Body of pancreas (tissue), 4 donors: ENCODE measurements at regions of chr21 and their contacts with region 1.

Region 1: DNA sequence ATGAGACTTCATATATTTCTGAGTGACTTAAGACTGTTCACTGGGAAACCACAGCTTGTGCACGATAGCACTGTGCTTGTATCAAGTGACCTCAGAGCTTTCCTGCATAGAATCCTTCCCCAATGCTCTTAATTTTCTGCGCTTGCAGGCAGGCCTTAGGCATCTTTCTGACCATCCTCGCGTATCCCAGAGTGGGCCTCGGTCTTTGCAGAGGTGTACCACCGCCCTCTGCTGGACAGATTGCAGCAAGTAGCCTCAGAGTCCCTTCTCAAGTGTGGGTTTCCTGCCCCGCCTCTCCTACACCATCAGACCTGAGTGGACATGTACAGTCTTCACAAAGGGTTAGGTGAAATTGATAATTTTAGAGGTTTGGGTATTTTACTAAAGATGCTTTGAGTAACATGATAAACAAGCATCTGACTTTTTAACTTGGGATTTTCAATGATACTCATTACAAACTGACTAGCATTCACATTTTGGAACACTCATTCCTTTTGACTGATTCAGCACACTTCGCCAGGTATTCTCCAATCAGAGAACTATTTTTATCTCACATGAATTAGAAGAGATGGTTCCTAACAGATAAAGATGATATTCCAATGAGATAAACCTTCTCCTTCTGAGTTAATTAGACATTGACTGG is 246.5 kb upstream of the USP25 start:
- DNase-seq: peak; percentile 88 to 91 (median 90)
- ATAC-seq: peak; percentile 98
- H3K4me3 ChIP-seq: no peak overlapping the region
- H3K27ac ChIP-seq: no peak overlapping the region
- H3K4me1 ChIP-seq: no peaks in the 10 kb centered on the region
- H3K27me3 ChIP-seq: no peaks in the 10 kb centered on the region
- CTCF ChIP-seq: peak; percentile 83 to 91 (median 87)
- POLR2A ChIP-seq: no peak

Region 2: GRCh38 chr21:14864211-14865021 is 618.8 kb before region 1 on chr21:
- intact Hi-C with region 1: loop called (anchors 10 kb)
- DNase-seq: peak; percentile 72 to 81 (median 77)
- ATAC-seq: peak; percentile 90
- H3K4me3 ChIP-seq: no peak overlapping the region
- H3K27ac ChIP-seq: peak overlapping the region in 2 of 4 donors; percentile 9 to 47
- H3K4me1 ChIP-seq: peaks cover 8% of the 10 kb centered on the region
- H3K27me3 ChIP-seq: no peaks in the 10 kb centered on the region
- CTCF ChIP-seq: peak; percentile 21 to 68 (median 57)
- POLR2A ChIP-seq: no peak

Region 3: GRCh38 chr21:15064576-15065391 is 418.5 kb before region 1 on chr21 and contains the start of gene NRIP1:
- intact Hi-C with region 1: loop called (anchors 5 kb)
- DNase-seq: peak; percentile 91 to 94 (median 93)
- ATAC-seq: peak; percentile 94
- H3K4me3 ChIP-seq: peak within 1 kb of the TSS; percentile 86 to 89
- H3K27ac ChIP-seq: peak within 1 kb of the TSS; percentile 87 to 97 (median 96)
- H3K4me1 ChIP-seq: peaks cover 29% of the 10 kb centered on the region
- H3K27me3 ChIP-seq: no peaks in the 10 kb centered on the region
- CTCF ChIP-seq: peak in 1 of 7 experiments; percentile 11
- POLR2A ChIP-seq: peak; percentile 63 to 76 (median 64)
- total RNA-seq, gene NRIP1: 18.5 to 27.8 TPM

Region 4: DNA sequence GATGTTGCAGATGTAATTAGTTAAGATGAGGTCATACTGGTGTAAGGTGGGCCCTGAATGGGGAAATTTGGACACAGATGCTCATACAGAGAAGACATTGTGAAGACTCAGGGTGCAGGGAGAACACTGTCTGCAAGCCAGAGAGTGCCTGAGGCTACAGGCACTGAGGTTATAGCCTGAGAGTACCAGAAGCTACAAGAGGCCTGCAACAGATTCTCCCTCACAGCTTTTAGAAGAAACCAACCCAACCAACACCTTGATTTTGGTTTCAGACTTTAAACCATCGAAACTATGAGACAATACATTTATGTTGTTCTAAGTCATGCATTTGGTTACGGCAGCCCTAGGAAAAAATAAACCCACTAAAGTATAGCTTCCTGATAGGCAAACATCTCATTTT is 75.2 kb before region 1 on chr21:
- intact Hi-C with region 1: no loop called
- DNase-seq: no peak
- ATAC-seq: no peak
- H3K4me3 ChIP-seq: no peak overlapping the region
- H3K27ac ChIP-seq: no peak overlapping the region
- H3K4me1 ChIP-seq: no peaks in the 10 kb centered on the region
- H3K27me3 ChIP-seq: no peaks in the 10 kb centered on the region
- CTCF ChIP-seq: no peak
- POLR2A ChIP-seq: no peak

Region 5: GRCh38 chr21:15592271-15592860 is 109.1 kb after region 1 on chr21:
- intact Hi-C with region 1: no loop called
- DNase-seq: peak in 1 of 4 donors; percentile 18
- ATAC-seq: no peak
- H3K4me3 ChIP-seq: no peak overlapping the region
- H3K27ac ChIP-seq: no peak overlapping the region
- H3K4me1 ChIP-seq: no peaks in the 10 kb centered on the region
- H3K27me3 ChIP-seq: no peaks in the 10 kb centered on the region
- CTCF ChIP-seq: peak; percentile 25 to 81 (median 70)
- POLR2A ChIP-seq: no peak

Region 6: DNA sequence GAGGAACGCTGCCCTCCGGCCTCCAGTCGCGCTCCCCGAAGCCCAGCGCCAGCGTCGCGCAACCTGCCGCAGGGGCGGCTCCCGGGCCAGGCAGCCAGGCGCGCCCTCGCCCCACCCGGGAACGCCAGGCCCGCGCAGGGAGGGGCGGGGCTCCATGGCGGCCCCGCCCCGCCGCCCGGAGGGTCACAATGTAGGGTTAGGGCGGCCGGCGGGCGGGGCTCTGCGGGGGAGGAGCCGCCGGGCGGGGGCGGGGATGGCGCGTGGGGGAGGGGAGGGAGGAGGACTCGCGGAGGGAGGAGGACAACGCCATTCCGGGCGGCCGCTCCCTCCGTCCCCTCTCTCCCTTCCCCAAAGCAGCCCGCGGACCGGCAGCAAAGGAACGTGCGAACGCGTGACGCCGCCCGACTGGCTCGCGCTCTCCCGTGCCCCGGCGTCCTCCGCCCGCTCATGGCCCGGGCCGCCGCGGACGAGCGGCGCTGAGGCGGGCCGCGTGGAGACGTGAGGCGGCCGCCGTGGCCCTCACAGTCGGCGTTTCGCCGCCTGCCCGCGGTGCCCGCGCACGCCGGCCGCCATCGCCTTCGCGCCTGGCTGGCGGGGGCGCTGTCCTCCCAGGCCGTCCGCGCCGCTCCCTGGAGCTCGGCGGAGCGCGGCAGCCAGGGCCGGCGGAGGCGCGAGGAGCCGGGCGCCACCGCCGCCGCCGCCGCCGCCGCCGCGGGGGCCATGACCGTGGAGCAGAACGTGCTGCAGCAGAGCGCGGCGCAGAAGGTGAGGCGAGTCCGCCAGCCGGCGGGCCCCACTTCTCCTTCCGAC is 246.6 kb after region 1 on chr21 and contains the start of gene USP25:
- intact Hi-C with region 1: no loop called
- DNase-seq: peak; percentile 93 to 95 (median 94)
- ATAC-seq: peak; percentile 92
- H3K4me3 ChIP-seq: peak within 1 kb of the TSS; percentile 63 to 92
- H3K27ac ChIP-seq: peak within 1 kb of the TSS; percentile 88 to 97 (median 96)
- H3K4me1 ChIP-seq: peaks cover 26% of the 10 kb centered on the region
- H3K27me3 ChIP-seq: no peaks in the 10 kb centered on the region
- CTCF ChIP-seq: peak in 2 of 7 experiments; percentile 53 to 58
- POLR2A ChIP-seq: peak; percentile 69 to 78 (median 77)
- total RNA-seq, gene USP25: 31.4 to 37.9 TPM